ENCODE measurements at regions of chr1 and their contacts with region 1.

Region 1: GRCh38 chr1:66996018-66996682 is 57.8 kb downstream of the SLC35D1 start:
- ATAC-seq: peak in 6 of 8 experiments; percentile 29 to 86 (median 68)
- H3K4me3 ChIP-seq: no peak overlapping the region
- H3K27ac ChIP-seq: no peak overlapping the region
- H3K4me1 ChIP-seq: no peaks in the 10 kb centered on the region

Region 2: DNA sequence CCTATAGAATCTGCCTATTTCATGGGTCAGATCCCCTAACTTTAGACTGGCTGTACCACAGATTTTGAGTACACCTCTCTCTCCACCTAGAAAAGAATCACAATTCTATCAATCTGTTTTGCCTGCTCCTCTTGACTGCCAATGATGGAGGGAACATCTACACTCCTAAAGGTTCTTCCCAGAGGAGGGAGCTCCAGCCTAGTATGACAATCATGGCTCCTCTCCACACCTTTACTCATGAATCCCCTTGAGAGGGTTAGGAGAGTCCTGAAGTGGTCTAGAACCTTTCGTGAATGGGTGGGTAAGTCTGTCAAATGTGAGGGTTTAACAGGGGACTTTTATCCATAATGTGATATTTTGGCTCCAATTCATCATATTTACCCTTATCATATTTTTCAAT is 119.5 kb before region 1 on chr1:
- in situ Hi-C with region 1: no loop called
- ATAC-seq: no peak
- H3K4me3 ChIP-seq: no peak overlapping the region
- H3K27ac ChIP-seq: no peak overlapping the region
- H3K4me1 ChIP-seq: no peaks in the 10 kb centered on the region

Region 3: DNA sequence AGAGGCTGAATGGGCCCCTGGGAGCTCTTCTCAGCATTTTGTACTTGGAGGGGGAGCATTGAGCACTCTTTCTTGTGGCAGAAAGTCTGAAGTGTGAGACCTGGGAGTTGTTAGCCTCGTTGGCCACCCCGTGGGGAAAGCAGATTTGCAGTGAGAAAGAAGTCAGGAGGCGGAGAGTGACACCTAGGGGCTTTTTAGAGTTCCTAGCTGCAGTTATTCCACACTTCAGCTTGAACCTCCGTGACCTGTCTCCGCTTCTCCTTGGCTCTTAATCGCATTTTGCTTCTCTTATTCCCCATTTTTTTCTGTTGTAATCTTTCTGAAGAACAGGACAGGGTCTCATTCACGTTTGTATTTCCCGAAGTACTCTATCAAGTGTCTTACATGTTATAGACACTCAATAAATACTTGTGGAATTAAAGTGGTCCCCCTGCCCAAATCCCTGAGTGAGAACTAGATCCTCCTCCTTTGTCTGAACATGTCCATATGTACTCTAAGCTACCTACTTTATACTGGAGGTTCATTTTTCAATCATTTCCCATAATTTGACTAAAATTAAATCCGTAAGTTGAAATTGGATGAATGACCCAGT is 153.1 kb after region 1 on chr1:
- in situ Hi-C with region 1: loop called in 1 of 9 experiments (anchors 10 kb)
- ATAC-seq: peak in 6 of 8 experiments; percentile 53 to 100 (median 93)
- H3K4me3 ChIP-seq: no peak overlapping the region
- H3K27ac ChIP-seq: no peak overlapping the region
- H3K4me1 ChIP-seq: no peaks in the 10 kb centered on the region

Measured in motor neuron (in vitro differentiated cells).